Lower leg skin (tissue), 4 donors: ENCODE measurements at regions of chr5 and their contacts with region 1.

Region 1: DNA sequence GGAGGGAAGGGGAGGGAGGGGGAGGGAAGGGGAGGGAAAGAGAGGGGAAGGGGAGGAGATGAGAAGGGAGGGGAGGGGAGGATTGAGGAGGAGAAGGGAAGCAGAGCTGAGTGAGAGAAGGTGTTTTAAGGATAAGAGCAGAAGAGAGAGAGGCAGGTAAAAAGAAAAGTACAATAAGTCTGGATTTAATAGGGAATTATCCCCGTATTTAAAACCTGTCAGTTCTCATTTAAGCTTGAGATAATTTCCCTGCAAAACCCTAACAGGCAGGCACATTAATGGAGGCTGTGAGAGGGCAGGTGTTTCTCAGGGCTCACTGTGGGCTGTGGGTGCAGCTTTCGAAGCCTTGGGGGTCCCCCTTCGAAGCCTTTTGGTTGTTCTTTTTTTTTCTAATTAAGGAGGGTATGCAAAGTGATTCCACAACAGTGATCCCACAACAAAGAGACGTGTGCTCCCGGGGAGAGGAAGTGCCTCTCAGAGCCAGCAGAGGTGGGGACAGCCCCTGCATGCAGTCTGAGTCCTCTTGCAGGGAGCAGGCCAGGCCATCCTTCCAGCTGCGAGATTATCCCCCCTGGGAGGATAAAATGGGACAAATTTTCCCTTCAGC is 317.9 kb upstream of the IRX1 start:
- DNase-seq: no peak
- H3K4me3 ChIP-seq: no peak overlapping the region
- CTCF ChIP-seq: no peak
- POLR2A ChIP-seq: no peak

Region 2: GRCh38 chr5:3302228-3302627 is 24.5 kb after region 1 on chr5:
- intact Hi-C with region 1: no loop called
- DNase-seq: no peak
- H3K4me3 ChIP-seq: no peak overlapping the region
- CTCF ChIP-seq: no peak
- POLR2A ChIP-seq: no peak

Region 3: GRCh38 chr5:3312299-3312698 is 34.6 kb after region 1 on chr5:
- intact Hi-C with region 1: loop called (anchors 1 kb)
- DNase-seq: peak in 1 of 2 donors; percentile 40
- H3K4me3 ChIP-seq: no peak overlapping the region
- CTCF ChIP-seq: no peak
- POLR2A ChIP-seq: no peak

Region 4: DNA sequence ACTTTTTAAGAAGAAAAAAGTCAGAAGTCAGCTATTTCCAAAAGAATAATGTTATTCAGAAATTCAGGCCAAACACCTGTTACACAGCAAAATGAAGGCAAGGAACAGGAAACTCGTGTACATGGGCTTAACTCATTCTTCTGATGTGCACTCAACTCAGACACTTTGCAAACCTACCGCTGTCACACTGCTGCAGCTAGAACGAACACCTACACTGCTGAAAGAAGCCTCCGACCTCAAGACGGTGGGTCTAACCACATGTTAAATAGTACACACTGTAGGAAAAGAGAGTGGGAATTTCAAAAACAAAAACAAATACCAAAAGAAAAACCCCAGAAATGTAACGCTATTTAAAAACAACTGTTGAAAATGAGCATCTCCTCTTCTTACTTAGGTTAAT is 702.5 kb after region 1 on chr5:
- intact Hi-C with region 1: loop called (anchors 5 kb)
- DNase-seq: no peak
- H3K4me3 ChIP-seq: no peak overlapping the region
- CTCF ChIP-seq: no peak
- POLR2A ChIP-seq: no peak

Region 5: GRCh38 chr5:4191041-4191440 is 913.3 kb after region 1 on chr5:
- intact Hi-C with region 1: no loop called
- DNase-seq: no peak
- H3K4me3 ChIP-seq: no peak overlapping the region
- CTCF ChIP-seq: no peak
- POLR2A ChIP-seq: no peak